Right ventricle myocardium inferior (tissue), 1 donor: ENCODE measurements at regions of chr16 and their contacts with region 1.

Region 1: DNA sequence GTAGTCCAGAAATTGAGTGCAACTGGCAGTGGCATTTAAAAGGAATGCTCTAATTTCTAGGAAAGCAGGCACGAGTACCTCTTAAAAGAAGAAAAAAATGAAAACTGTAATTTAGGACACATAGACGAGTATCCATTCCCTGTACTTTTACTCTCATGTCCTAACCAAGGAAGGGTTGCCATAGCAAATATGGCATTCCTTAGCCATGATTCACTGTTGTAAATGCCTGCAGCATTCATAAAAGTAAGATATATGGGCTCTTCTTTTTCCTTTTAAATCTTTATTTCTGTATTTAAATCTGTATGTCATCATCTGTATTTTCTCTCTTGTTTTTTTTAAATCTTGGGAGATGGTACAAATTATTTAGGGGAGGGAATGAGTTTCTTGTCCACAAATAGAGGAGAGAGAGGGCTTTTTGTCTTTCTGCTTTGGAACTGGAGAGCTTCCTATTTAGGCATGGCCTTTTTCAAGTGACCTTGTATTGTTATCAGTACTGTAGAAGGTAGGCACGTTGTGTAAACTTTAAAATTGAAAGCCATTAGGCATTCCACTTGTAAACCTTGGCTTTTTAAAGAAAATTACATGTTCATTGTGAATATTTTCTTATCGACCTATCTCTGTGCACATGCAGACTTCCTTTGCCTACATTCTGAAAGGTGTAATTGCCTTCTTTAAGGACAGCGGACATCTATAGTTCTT is 50.0 kb downstream of the TENT4B start:
- DNase-seq: no peak
- ATAC-seq: peak; percentile 53

Region 2: DNA sequence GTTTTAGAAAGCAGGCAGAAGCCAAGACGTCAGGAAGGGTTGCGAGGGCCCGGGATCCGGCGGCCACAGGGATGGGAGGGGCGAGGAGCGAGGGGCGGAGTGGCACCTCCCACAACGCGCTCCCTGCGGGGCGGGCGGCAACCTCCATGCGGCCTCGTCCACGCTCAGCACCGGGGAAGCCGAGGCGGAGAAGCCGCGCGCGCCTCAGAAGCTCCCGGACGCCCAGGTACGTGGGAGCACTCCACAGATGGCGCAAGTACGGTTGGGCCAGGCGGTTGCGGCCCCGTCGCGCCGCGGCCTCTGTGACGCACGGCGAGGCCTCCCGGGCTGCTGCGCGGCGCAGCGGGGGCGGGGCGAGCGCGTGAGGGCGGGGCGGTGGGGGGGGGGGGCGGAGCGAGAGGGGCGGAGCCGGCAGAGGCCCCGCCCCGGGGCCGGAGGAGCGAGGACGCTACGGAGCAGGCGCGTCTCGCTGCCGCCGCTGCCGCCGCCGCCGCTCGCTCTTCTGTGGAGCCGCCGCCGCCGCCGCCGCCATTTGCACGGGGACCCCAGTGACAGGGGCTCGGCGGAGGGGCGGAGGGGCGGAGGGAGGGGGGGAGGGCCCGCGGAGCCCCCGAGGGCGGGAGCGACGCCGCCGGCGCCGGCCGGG is 50.1 kb before region 1 on chr16 and contains the start of gene TENT4B:
- intact Hi-C with region 1: loop called (anchors 2 kb)
- DNase-seq: peak; percentile 93
- ATAC-seq: peak; percentile 95
- total RNA-seq, gene TENT4B: 7.8 TPM

Region 3: DNA sequence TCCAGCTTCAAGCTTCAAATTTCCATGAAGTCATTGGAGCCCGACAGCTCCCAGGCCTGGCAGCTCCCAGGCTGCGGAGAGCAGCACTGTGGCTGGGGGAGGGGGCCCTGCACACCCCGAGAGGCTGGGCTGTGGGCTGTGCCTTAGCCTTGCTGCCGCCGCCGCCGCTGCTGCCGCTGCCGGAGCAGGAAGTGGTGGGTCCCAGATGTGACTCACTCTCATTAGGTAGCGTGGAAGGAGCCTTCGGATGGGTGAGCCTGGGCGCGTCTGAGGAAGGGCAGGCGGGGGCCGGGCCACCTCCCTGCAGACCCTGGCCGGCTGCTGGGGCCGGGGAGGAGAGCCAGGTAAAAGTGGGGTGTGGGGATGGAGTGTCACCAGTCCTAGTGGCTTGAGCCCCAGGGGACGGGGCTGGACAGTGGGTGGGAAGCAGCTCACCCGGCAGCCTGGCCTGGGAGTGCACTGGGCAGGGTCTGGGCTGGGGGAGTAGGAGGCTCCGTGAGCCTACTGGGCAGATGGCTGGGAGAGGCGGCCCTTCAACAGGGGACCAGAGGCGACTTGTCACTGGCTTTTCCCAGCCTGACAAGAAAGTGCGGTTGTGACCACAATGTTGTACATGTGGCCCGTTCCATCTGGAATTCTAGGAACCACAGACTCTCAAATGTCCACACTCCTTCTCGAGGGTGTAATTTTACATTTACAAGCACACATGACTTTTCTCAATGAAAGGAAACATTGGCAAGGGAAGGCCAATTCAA is 63.4 kb after region 1 on chr16 and contains the start of gene ADCY7:
- intact Hi-C with region 1: no loop called
- DNase-seq: peak; percentile 90
- ATAC-seq: peak; percentile 81
- total RNA-seq, gene ADCY7: 11.7 TPM